Adrenal gland (tissue), 19 donors: ENCODE measurements at regions of chr3 and their contacts with region 1.

Region 1: DNA sequence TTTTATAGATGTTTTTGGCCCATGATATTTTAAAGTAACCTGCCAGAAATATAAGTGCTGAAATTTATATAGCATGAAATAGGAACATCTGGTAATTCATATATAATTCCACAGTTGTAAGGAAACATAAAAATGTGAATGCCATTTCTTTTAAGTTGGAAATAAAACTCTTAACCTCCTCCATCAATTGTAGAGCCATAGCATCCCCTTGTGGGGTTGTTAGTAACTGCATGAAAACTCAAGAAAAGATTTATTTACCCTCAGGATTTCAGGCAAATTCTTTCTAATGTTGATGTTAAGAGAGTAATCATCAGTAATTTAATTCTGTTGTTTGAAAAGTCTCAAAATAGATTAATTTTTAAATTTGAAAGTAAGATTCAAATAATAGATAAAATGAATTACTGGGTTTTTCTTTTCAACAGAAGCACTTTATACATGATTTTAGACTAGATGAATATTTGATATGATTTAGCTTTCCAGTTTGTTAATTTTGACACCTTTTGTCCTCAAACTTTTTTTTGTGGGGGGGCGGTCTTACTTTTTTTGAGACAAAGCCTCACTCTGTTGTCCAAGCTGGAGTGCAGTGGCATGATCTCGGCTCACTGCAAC is 74.7 kb downstream of the RASA2 start:
- DNase-seq: peak in 4 of 7 donors; percentile 29 to 52 (median 44)
- H3K4me3 ChIP-seq: no peak overlapping the region
- H3K27ac ChIP-seq: no peak overlapping the region
- H3K4me1 ChIP-seq: peaks cover 0 to 14% of the 10 kb centered on the region in 2 donors
- H3K27me3 ChIP-seq: no peaks in the 10 kb centered on the region
- CTCF ChIP-seq: peak; percentile 96 to 100 (median 99)
- POLR2A ChIP-seq: no peak

Region 2: DNA sequence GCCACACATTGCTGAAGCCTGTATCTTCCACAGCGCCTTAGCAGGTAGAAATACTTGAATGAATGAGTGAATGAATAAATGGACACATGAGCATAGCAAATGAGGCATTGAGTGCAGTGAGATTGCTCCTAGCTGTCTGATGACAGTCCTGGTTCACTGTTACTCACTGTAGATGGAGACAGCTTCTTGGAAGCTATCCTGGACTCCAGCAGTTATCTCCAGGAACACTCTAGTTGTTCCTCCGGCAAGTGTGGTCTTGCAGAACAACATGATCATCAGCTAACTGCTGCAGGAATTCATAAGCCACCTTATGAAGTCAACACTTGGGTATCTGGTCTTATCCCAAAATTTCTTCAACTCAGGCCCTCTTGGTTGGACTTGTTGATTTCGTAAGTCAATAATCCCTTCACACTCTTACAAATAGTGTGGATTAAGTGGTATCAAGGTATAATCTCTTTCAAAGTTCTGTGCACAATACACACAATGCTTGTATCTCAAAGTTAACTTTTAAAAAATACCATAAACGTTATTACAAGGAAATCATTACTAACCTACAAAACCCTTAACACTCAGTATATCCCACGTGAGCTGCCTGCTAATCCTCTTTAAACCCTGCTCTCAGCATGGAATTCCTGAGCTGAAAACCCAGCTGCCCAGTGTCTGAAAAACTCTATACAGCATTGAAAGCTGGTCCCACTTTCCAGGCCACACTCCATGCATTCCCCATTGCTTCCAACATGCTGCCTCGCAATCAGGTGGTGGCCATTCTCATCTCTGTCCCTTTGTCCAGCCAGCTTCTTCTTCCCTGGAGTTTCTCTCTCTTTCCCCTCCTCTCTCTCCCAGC is 207.7 kb before region 1 on chr3:
- intact Hi-C with region 1: loop called in 1 of 2 experiments (anchors 10 kb)
- DNase-seq: no peak
- H3K4me3 ChIP-seq: no peak overlapping the region
- H3K27ac ChIP-seq: no peak overlapping the region
- H3K4me1 ChIP-seq: no peaks in the 10 kb centered on the region
- H3K27me3 ChIP-seq: no peaks in the 10 kb centered on the region
- CTCF ChIP-seq: no peak
- POLR2A ChIP-seq: no peak

Region 3: DNA sequence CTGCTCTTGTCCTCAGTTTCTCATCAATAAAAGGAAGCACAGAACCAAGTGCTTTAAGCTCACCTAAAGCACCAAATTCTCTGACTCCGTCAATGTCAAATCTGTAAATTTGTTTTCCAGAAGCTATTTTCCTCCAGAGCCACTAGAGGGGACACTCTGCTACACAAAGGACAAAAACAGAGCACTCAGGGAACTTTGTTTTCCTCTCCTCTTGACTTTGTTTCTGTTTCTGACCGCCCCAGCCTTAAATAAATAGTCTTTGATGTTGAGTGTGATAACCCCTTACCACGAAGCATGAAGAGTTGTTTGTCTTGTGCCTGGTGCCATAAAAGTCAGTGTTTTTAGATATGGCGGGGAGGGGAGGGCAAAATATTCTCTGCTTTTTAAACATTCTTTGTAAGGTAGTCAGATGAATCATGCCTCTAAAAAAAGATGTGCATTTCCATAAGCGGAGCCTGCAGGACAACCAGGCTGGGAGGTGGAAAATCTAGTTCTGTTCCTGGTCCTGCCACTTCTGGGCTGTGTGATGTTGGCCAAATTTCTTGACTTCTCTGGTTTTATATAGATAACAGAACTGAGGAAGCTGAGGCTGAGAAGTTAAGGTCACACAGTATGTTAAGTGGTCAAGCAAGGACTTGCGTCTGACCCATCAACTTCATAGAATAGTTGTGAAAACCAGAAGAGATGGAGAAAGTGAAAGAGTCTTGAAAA is 200.5 kb before region 1 on chr3:
- intact Hi-C with region 1: loop called (anchors 5 to 10 kb)
- DNase-seq: peak in 2 of 7 donors; percentile 31 to 43
- H3K4me3 ChIP-seq: peak overlapping the region in 1 of 4 donors; percentile 32
- H3K27ac ChIP-seq: peak overlapping the region in 2 of 5 donors; percentile 59 to 77
- H3K4me1 ChIP-seq: peaks cover 6 to 9% of the 10 kb centered on the region in 2 donors
- H3K27me3 ChIP-seq: no peaks in the 10 kb centered on the region
- CTCF ChIP-seq: peak; percentile 63 to 96 (median 88)
- POLR2A ChIP-seq: no peak

Region 4: GRCh38 chr3:141460097-141460704 is 101.3 kb before region 1 on chr3:
- intact Hi-C with region 1: loop called (anchors 5 kb)
- DNase-seq: peak; percentile 88 to 96 (median 90)
- H3K4me3 ChIP-seq: no peak overlapping the region
- H3K27ac ChIP-seq: no peak overlapping the region
- H3K4me1 ChIP-seq: no peaks in the 10 kb centered on the region
- H3K27me3 ChIP-seq: no peaks in the 10 kb centered on the region
- CTCF ChIP-seq: peak; percentile 83 to 93 (median 88)
- POLR2A ChIP-seq: peak in 1 of 2 donors; percentile 7

Region 5: DNA sequence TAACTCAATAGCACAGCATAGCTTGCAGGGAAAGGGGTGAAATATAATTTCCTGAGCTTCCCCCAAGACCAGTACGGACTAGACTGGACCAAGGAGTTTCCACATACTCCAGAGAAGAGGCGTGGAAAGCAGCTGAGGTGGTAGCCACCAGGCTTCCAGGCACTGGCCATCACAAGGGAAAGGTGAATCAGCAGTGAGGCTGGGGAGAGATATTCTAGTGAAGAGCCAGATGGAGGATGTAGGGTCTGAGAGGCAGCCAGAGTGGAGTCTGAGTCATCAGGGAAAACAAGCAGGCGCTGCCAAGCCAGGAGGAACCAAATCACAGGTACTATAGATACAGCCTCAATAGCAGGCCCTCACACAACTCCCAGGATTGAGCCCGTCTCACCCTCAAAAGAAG is 84.3 kb before region 1 on chr3:
- intact Hi-C with region 1: loop called (anchors 5 kb)
- DNase-seq: peak in 3 of 7 donors; percentile 32 to 53 (median 48)
- H3K4me3 ChIP-seq: no peak overlapping the region
- H3K27ac ChIP-seq: no peak overlapping the region
- H3K4me1 ChIP-seq: peaks cover 0 to under 1% of the 10 kb centered on the region in 2 donors
- H3K27me3 ChIP-seq: no peaks in the 10 kb centered on the region
- CTCF ChIP-seq: no peak
- POLR2A ChIP-seq: no peak

Region 6: DNA sequence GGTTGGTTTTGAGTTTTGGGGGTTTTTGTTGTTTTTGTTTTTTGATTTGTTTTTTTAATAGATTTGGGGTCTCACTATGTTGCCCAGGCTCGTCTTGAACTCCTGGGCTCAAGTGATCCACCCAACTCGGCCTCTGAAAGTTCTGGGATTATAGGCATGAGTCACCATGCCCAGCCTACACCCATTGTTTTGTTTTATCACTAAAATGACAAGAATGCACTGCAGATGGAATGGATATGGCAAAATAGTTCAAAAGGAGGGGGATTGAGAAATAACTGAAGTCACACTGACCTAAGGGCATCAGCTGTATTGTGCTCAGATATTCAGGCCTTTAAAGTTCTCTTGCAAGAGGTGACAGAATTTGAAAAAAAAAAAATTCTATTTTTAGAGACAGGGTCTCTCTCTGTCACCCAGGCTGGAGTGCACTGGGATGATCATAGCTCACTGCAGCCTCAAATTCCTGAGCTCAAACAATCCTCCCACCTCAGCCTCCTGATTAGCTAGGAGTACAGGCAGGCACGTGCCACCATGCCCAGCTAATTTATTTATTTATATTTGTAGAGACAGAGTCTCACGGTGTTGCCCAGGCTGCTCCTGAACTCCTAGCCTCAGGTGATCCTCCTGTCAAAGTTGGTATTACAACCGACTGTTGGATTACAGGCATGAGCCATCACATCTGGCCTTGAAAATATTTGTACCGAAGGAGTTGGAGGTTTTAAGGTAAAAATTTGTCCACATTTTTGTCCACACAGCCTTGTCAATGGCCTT is 79.1 kb before region 1 on chr3:
- intact Hi-C with region 1: loop called (anchors 5 kb)
- DNase-seq: peak in 3 of 7 donors; percentile 35 to 47 (median 43)
- H3K4me3 ChIP-seq: no peak overlapping the region
- H3K27ac ChIP-seq: no peak overlapping the region
- H3K4me1 ChIP-seq: peaks cover 0 to 13% of the 10 kb centered on the region in 2 donors
- H3K27me3 ChIP-seq: no peaks in the 10 kb centered on the region
- CTCF ChIP-seq: no peak
- POLR2A ChIP-seq: no peak

Region 7: GRCh38 chr3:141523615-141524375 is 37.7 kb before region 1 on chr3:
- intact Hi-C with region 1: no loop called
- DNase-seq: no peak
- H3K4me3 ChIP-seq: no peak overlapping the region
- H3K27ac ChIP-seq: no peak overlapping the region
- H3K4me1 ChIP-seq: peaks cover 2 to 10% of the 10 kb centered on the region in 2 donors
- H3K27me3 ChIP-seq: no peaks in the 10 kb centered on the region
- CTCF ChIP-seq: no peak
- POLR2A ChIP-seq: no peak